CD8-positive, alpha-beta T cell (primary cell): ENCODE measurements at regions of chr15 and their contacts with region 1.

Region 1: DNA sequence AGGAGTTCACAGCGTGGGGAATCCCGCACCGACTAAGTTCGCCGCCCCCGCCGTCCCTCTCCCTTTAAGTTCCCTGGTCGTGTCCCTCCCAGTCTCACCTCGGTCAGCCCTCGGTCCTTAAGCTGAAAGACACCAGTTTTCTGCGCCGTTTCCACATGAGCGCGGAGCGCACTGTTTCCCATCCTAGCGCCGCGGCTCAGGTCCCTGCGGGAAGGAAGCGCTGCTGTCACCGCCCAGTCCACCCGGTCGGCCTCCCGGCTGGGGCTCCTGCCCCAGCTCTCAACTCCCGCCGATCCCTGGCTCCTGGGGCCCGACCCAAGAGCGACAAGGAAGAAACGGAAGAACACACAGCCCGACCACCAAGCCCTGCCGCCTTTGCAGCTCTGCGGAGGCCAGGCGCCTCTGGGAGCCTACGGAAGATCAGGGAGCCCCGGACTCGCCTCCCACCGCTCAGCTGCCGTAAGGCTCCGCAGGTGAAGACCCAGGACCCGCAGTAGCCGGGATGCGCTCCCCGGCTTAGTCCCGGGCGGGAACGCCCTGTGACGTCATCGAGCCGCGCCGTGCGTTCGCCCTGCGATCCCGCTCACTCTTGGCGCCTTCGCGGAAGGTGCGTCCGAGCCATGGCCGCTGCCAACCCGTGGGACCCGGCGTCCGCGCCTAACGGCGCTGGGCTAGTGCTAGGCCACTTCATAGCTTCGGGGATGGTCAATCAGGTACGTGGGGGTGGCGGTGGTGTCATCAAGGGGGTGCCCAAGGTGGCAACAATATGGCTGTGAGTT is at the starts of genes HAUS2 and LRRC57:
- DNase-seq: peak; percentile 70 to 93 (median 89)
- ATAC-seq: peak; percentile 86
- H3K4me3 ChIP-seq: peak within 1 kb of the TSS; percentile 78 to 90
- H3K4me3 Mint-ChIP-seq: peak within 1 kb of the TSS; percentile 95
- H3K27ac ChIP-seq: peak within 1 kb of the TSS; percentile 82 to 95
- H3K27ac Mint-ChIP-seq: peak within 1 kb of the TSS; percentile 97
- H3K4me1 ChIP-seq: peaks cover 27% of the 10 kb centered on the region
- H3K4me1 Mint-ChIP-seq: peaks cover 46% of the 10 kb centered on the region
- H3K27me3 ChIP-seq: no peaks in the 10 kb centered on the region
- H3K27me3 Mint-ChIP-seq: no peaks in the 10 kb centered on the region
- CTCF ChIP-seq: no peak
- total RNA-seq, gene HAUS2: 33.1 to 39.1 TPM
- total RNA-seq, gene LRRC57: 30.0 to 31.1 TPM

Region 2: GRCh38 chr15:42207674-42208579 is 340.5 kb before region 1 on chr15 and contains the start of gene VPS39:
- CTCF ChIA-PET with region 1: no interaction called
- POLR2A ChIA-PET with region 1: no interaction called
- intact Hi-C with region 1: no loop called
- DNase-seq: peak; percentile 65 to 90 (median 85)
- ATAC-seq: peak; percentile 98
- H3K4me3 ChIP-seq: peak within 1 kb of the TSS; percentile 73 to 96
- H3K4me3 Mint-ChIP-seq: peak within 1 kb of the TSS; percentile 97
- H3K27ac ChIP-seq: peak within 1 kb of the TSS; percentile 83 to 84
- H3K27ac Mint-ChIP-seq: peak within 1 kb of the TSS; percentile 95
- H3K4me1 ChIP-seq: peaks cover 23% of the 10 kb centered on the region
- H3K4me1 Mint-ChIP-seq: peaks cover 40% of the 10 kb centered on the region
- H3K27me3 ChIP-seq: no peaks in the 10 kb centered on the region
- H3K27me3 Mint-ChIP-seq: no peaks in the 10 kb centered on the region
- CTCF ChIP-seq: no peak
- total RNA-seq, gene VPS39: 81.5 to 82.9 TPM

Region 3: GRCh38 chr15:42581272-42581730 is 32.9 kb after region 1 on chr15:
- CTCF ChIA-PET with region 1: interaction called, 3 read pairs
- POLR2A ChIA-PET with region 1: interaction called, 22 read pairs
- intact Hi-C with region 1: no loop called
- DNase-seq: peak; percentile 57 to 89 (median 83)
- ATAC-seq: peak; percentile 99
- H3K4me3 ChIP-seq: peak overlapping the region; percentile 56 to 82
- H3K4me3 Mint-ChIP-seq: peak overlapping the region; percentile 87
- H3K27ac ChIP-seq: peak overlapping the region; percentile 77 to 84
- H3K27ac Mint-ChIP-seq: peak overlapping the region; percentile 93
- H3K4me1 ChIP-seq: peaks cover 20% of the 10 kb centered on the region
- H3K4me1 Mint-ChIP-seq: peaks cover 48% of the 10 kb centered on the region
- H3K27me3 ChIP-seq: no peaks in the 10 kb centered on the region
- H3K27me3 Mint-ChIP-seq: no peaks in the 10 kb centered on the region
- CTCF ChIP-seq: no peak

Region 4: DNA sequence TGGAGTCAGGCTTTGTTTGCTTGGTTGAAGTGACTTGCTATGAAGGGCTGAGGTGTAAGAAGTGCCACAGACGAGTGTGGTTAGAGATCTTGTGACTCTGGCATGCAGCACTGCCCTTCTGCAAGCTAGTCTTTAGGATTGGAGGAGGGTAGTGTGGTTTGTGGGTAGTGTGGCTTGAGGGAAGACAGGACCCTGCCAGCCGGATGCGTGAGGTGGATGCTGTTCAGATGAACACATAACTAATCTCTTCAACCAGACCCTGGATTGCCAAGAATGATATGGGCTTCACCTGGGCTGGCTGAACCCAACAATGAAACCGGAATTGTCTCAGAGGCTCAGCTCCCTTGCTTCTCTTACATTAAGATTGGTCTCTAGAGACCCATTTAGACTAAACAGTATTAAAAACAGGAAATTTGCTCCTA is 59.7 kb after region 1 on chr15:
- CTCF ChIA-PET with region 1: no interaction called
- POLR2A ChIA-PET with region 1: interaction called, 3 read pairs
- intact Hi-C with region 1: loop called in 1 of 2 experiments (anchors 2 kb)
- DNase-seq: peak; percentile 6 to 76 (median 46)
- ATAC-seq: peak; percentile 60
- H3K4me3 ChIP-seq: no peak overlapping the region
- H3K4me3 Mint-ChIP-seq: peak overlapping the region; percentile 71
- H3K27ac ChIP-seq: peak overlapping the region in 1 of 2 experiments; percentile 25
- H3K27ac Mint-ChIP-seq: peak overlapping the region; percentile 68
- H3K4me1 ChIP-seq: peaks cover 43% of the 10 kb centered on the region
- H3K4me1 Mint-ChIP-seq: peaks cover 53% of the 10 kb centered on the region
- H3K27me3 ChIP-seq: no peaks in the 10 kb centered on the region
- H3K27me3 Mint-ChIP-seq: no peaks in the 10 kb centered on the region
- CTCF ChIP-seq: no peak

Region 5: DNA sequence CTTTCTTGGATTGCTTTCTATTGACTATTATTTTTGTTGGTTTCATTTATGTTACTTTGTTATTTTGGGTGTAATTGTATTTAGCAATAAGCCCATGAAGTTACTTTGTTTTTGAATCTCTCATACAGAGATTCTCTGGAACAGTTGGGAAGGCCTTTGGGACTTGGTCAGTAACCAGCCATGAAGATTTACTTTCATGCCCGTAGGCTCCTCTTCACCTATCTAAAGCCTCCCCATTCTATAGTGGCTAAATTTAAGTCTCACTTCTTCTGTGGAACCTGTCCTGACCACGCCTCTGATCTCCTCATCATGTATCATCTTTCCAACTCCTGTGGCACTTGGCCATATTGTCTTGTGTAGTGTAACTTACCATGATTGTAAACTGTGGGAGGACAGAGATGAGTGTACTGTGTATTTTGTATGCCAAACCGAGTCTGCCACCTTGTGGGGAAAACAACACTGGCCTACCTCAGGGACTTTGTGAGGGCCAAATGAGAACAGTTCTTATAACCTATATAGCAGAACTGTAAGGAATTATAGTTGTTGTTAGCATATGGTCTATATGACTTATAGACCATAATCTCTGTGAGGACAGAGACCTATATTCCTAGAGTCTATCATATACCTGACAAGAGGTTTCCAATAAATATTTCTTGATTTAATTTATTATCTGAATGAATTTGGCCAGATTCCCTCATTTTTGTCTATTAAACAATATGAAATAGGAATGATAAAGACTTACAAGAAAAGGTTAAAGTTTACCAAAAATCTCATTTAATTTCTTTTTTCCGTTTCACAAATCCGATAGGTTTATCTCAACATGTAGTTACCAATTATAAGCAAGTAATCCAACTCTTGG is 102.0 kb after region 1 on chr15:
- CTCF ChIA-PET with region 1: interaction called, 5 read pairs
- POLR2A ChIA-PET with region 1: no interaction called
- intact Hi-C with region 1: loop called (anchors 1 to 2 kb)
- DNase-seq: peak; percentile 26 to 76 (median 56)
- ATAC-seq: peak; percentile 85
- H3K4me3 ChIP-seq: no peak overlapping the region
- H3K4me3 Mint-ChIP-seq: no peak overlapping the region
- H3K27ac ChIP-seq: no peak overlapping the region
- H3K27ac Mint-ChIP-seq: no peak overlapping the region
- H3K4me1 ChIP-seq: no peaks in the 10 kb centered on the region
- H3K4me1 Mint-ChIP-seq: peaks cover 2% of the 10 kb centered on the region
- H3K27me3 ChIP-seq: no peaks in the 10 kb centered on the region
- H3K27me3 Mint-ChIP-seq: no peaks in the 10 kb centered on the region
- CTCF ChIP-seq: peak; percentile 66